ENCODE measurements at regions of chr19 and their contacts with region 1.

Region 1: GRCh38 chr19:5031231-5032100 is 62.6 kb downstream of the KDM4B start:
- DNase-seq: peak; percentile 70 to 99
- H3K4me3 ChIP-seq: no peak overlapping the region
- H3K27ac ChIP-seq: no peak overlapping the region
- H3K4me1 ChIP-seq: peaks cover 0 to 4% (median 0%) of the 10 kb centered on the region in 4 experiments; a peak in 1 of 7 replicates
- H3K27me3 ChIP-seq: no peaks in the 10 kb centered on the region
- CTCF ChIP-seq: peak; percentile 94 to 98 (median 97)
- EP300 ChIP-seq: no peak
- POLR2A ChIP-seq: no peak
- RAD21 ChIP-seq: peak; percentile 97 to 98

Region 2: DNA sequence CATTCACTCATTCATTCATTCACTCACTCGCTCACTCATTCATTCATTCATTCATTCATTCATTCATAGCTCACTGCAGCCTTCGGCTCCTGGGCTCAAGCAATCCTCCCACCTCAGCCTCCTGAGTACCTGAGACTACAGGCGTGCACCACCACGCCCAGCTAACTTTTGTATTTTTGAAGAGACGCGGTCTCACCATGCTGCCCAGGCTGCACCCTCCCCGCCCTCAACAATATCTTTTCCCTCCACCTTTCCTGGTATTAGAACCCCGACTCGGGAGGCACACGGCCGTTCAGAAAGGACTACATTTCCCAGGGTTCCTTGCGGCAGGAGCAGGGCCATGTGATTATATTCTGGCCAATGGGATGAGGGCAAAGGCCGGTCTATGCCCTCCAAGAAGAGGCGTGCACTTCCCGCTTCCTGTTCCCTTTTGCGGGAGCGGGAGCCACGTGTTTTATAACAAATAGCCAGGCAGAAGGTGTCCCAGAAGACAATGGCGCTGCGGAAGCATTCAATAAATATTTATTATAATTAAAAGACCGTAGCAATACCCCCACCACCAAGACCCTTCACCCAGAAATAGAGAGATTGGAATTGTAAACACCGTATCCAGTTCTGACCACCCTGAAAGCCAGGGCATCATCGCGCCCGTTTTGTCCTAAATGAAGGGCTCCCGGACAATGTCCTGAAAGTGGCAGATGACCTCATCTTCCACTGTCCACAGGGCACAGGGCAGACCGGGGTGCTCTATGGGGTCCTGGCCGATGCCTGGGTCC is 215.9 kb before region 1 on chr19:
- CTCF ChIA-PET with region 1: interaction called, 39 read pairs
- POLR2A ChIA-PET with region 1: no interaction called
- DNase-seq: peak; percentile 75 to 88
- H3K4me3 ChIP-seq: peak overlapping the region in 1 of 4 experiments; percentile 30; a peak in 2 of 8 replicates
- H3K27ac ChIP-seq: no peak overlapping the region
- H3K4me1 ChIP-seq: no peaks in the 10 kb centered on the region; a peak in 1 of 7 replicates
- H3K27me3 ChIP-seq: peaks cover 0 to 14% (median 12%) of the 10 kb centered on the region in 4 experiments; a peak in 6 of 7 replicates
- CTCF ChIP-seq: no peak
- EP300 ChIP-seq: no peak
- POLR2A ChIP-seq: no peak
- RAD21 ChIP-seq: no peak

Region 3: GRCh38 chr19:4909897-4910593 is 121.4 kb before region 1 on chr19:
- CTCF ChIA-PET with region 1: interaction called, 11 read pairs
- POLR2A ChIA-PET with region 1: interaction called, 4 read pairs
- DNase-seq: peak; percentile 64 to 92
- H3K4me3 ChIP-seq: peak overlapping the region; percentile 46 to 83 (median 56)
- H3K27ac ChIP-seq: no peak overlapping the region; the same call in 1 of the 2 replicates
- H3K4me1 ChIP-seq: peaks cover 0 to 14% (median 11%) of the 10 kb centered on the region in 4 experiments; a peak in 6 of 7 replicates
- H3K27me3 ChIP-seq: no peaks in the 10 kb centered on the region; a peak in 2 of 7 replicates
- CTCF ChIP-seq: no peak
- EP300 ChIP-seq: no peak
- POLR2A ChIP-seq: no peak; a peak in 1 of 3 replicates
- RAD21 ChIP-seq: no peak

Region 4: DNA sequence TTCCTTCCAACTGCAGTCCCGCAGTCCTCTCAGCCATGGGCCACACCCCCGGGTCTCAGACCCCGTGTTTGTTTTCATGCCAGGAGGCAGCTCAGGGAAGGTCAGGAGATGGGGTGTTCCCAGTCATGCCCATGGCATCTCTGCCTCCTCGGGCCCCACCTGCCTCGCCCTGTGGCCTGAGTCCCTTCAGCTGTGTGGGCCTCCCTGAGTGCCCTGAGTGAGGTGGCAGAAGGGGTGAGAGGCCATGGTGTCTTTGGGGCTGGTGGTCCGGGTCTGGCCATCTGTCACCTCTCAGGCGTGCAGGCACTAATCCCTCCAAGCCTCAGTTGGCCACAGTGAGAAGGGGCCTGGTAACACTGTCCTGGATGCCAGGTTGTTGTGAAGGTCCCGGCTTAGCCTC is 73.5 kb before region 1 on chr19:
- CTCF ChIA-PET with region 1: interaction called, 10 read pairs
- POLR2A ChIA-PET with region 1: no interaction called
- DNase-seq: no peak
- H3K4me3 ChIP-seq: no peak overlapping the region
- H3K27ac ChIP-seq: no peak overlapping the region
- H3K4me1 ChIP-seq: no peaks in the 10 kb centered on the region
- H3K27me3 ChIP-seq: no peaks in the 10 kb centered on the region
- CTCF ChIP-seq: no peak
- EP300 ChIP-seq: no peak
- POLR2A ChIP-seq: no peak
- RAD21 ChIP-seq: no peak

Region 5: GRCh38 chr19:4988770-4989251 is 42.7 kb before region 1 on chr19:
- CTCF ChIA-PET with region 1: interaction called, 17 read pairs
- POLR2A ChIA-PET with region 1: interaction called, 3 read pairs
- DNase-seq: no peak
- H3K4me3 ChIP-seq: no peak overlapping the region
- H3K27ac ChIP-seq: peak overlapping the region; percentile 5; the same call in 1 of the 2 replicates
- H3K4me1 ChIP-seq: peaks cover 0 to 2% (median 2%) of the 10 kb centered on the region in 4 experiments; a peak in 4 of 7 replicates
- H3K27me3 ChIP-seq: no peaks in the 10 kb centered on the region
- CTCF ChIP-seq: no peak
- EP300 ChIP-seq: no peak
- POLR2A ChIP-seq: no peak
- RAD21 ChIP-seq: no peak

Region 6: GRCh38 chr19:5048091-5048726 is 16.7 kb after region 1 on chr19:
- CTCF ChIA-PET with region 1: interaction called, 35 read pairs
- POLR2A ChIA-PET with region 1: no interaction called
- DNase-seq: peak; percentile 65 to 97
- H3K4me3 ChIP-seq: no peak overlapping the region
- H3K27ac ChIP-seq: no peak overlapping the region
- H3K4me1 ChIP-seq: peaks cover 0 to 8% (median 2%) of the 10 kb centered on the region in 4 experiments; a peak in 5 of 7 replicates
- H3K27me3 ChIP-seq: no peaks in the 10 kb centered on the region
- CTCF ChIP-seq: peak; percentile 98 to 99 (median 99)
- EP300 ChIP-seq: no peak
- POLR2A ChIP-seq: no peak
- RAD21 ChIP-seq: peak; percentile 99

Region 7: GRCh38 chr19:5186293-5187050 is 155.0 kb after region 1 on chr19:
- CTCF ChIA-PET with region 1: no interaction called
- POLR2A ChIA-PET with region 1: no interaction called
- DNase-seq: no peak
- H3K4me3 ChIP-seq: no peak overlapping the region
- H3K27ac ChIP-seq: no peak overlapping the region
- H3K4me1 ChIP-seq: no peaks in the 10 kb centered on the region
- H3K27me3 ChIP-seq: no peaks in the 10 kb centered on the region
- CTCF ChIP-seq: no peak
- EP300 ChIP-seq: no peak
- POLR2A ChIP-seq: no peak
- RAD21 ChIP-seq: no peak

Measured in H1 (cell line).